ENCODE measurements at regions of chr6 and their contacts with region 1.

Region 1: DNA sequence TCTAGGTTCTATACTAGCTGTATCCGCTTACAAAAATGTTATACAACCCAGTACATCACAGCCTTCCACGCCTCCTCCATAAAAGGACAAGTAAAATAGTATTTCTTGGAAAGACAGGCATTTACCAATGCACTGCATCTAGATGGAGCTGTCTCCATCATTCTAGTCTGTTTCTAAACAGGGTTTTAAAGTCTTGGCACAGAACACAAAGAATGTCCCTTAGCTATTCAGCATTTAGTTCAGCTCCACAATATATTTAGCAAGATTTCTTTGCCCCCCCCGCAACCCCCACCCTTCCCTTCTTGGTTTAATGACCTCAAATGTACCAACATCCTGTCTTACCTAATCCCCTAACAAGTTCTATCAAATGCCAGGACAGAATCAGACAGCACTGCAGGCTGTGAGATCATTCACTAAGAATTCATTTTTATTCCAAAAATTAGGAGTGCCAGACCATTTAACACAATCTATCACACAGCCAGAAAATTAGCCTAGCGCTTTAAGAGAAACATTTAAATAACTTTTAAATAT is 198.6 kb downstream of the BACH2 start:
- DNase-seq: peak; percentile 17 to 39
- ATAC-seq: peak; percentile 86 to 93 (median 89)
- H3K4me3 ChIP-seq: no peak overlapping the region
- H3K27ac ChIP-seq: peak overlapping the region in 9 of 10 donors; percentile 37 to 85 (median 72)
- H3K4me1 ChIP-seq: peaks cover 2 to 45% (median 27%) of the 10 kb centered on the region in 9 donors
- H3K27me3 ChIP-seq: no peaks in the 10 kb centered on the region
- CTCF ChIP-seq: peak in 7 of 9 donors; percentile 25 to 63 (median 51)

Region 2: DNA sequence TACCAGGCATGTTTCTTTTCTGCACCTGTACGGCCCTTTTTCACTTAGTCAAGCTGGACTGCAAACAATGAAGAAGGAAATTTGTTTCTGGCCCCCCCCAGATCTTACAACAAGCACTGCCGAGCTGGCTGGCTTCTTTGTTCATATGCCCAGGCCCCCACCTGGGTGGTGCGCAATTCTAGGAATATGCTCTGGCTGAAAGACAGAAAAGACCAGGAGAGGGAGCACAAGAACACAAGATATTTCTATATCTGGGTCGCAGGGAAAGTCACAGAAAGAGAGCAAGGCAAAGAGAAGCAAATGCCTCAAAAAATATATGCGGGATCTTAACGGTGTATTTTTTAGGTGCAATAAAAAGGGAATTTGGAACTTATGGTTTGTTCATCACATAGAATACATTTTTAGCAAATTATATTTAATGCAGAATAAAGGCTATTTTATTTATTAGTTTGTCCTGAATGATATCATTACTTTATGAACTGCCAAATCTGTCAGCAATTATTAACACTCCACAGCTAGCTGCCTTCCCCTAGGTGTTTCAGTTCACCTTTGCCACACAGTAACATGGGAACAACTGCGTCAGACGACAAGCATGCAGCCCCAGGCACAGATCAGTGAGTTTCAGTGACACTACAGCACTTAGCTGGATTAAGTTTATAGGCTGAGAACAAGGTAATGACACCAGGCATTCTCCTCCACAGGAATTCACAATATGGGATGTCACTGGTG is 127.3 kb before region 1 on chr6:
- intact Hi-C with region 1: loop called in 3 of 10 experiments (anchors 10 kb)
- DNase-seq: peak; percentile 18 to 48
- ATAC-seq: peak; percentile 24 to 90 (median 79)
- H3K4me3 ChIP-seq: no peak overlapping the region
- H3K27ac ChIP-seq: no peak overlapping the region
- H3K4me1 ChIP-seq: peaks cover 7 to 31% (median 21%) of the 10 kb centered on the region in 9 donors
- H3K27me3 ChIP-seq: no peaks in the 10 kb centered on the region
- CTCF ChIP-seq: peak in 8 of 9 donors; percentile 20 to 80 (median 68)

Region 3: GRCh38 chr6:89984926-89985750 is 112.9 kb before region 1 on chr6:
- intact Hi-C with region 1: no loop called
- DNase-seq: peak; percentile 77 to 93
- ATAC-seq: peak; percentile 90 to 96 (median 95)
- H3K4me3 ChIP-seq: peak overlapping the region in 1 of 10 donors; percentile 3
- H3K27ac ChIP-seq: peak overlapping the region in 9 of 10 donors; percentile 41 to 84 (median 66)
- H3K4me1 ChIP-seq: peaks cover 9 to 38% (median 24%) of the 10 kb centered on the region in 9 donors
- H3K27me3 ChIP-seq: no peaks in the 10 kb centered on the region
- CTCF ChIP-seq: no peak

Region 4: DNA sequence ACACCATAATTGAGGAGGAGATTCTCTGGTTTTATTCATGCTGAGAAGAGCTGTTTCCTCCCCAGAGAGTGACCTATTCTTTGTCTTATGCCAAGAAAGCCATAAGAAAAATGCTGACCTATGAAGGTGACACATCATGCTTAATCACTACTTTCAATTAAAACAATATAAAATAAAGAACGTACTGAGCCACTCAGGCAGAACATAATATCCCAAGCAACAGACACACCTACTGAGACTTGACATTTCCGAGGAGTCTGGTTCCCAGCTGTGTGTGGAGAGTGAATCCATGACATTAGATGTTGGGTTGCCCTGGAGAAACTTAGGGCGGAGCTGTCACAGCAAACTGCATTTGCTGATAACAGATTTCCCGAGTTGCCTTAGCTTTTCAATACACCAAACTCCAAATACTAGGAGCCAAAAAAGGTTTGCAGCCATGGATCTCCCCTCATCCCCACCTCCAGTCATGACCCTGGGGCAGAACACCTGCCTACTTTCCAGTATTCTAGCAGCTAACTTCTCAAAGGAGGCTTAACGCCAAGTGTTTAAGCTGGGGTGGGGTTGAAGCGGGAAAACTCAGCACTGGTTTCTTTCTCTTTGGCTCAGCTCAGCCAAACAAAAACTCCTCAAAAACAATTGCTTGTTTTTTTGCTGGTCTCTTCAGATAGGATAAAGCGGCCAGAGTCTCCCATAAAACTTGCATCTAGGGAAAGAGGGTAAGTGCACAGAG is 106.4 kb after region 1 on chr6:
- intact Hi-C with region 1: no loop called
- DNase-seq: no peak
- ATAC-seq: peak in 5 of 8 donors; percentile 26 to 79 (median 53)
- H3K4me3 ChIP-seq: no peak overlapping the region
- H3K27ac ChIP-seq: no peak overlapping the region
- H3K4me1 ChIP-seq: peaks cover 0 to 15% (median 0%) of the 10 kb centered on the region in 9 donors
- H3K27me3 ChIP-seq: no peaks in the 10 kb centered on the region
- CTCF ChIP-seq: no peak

Region 5: GRCh38 chr6:90383196-90383822 is 285.2 kb after region 1 on chr6:
- intact Hi-C with region 1: loop called in 1 of 10 experiments (anchors 10 kb)
- DNase-seq: no peak
- ATAC-seq: no peak
- H3K4me3 ChIP-seq: no peak overlapping the region
- H3K27ac ChIP-seq: no peak overlapping the region
- H3K4me1 ChIP-seq: peaks cover 0 to 7% (median 0%) of the 10 kb centered on the region in 9 donors
- H3K27me3 ChIP-seq: peaks cover 0 to 5% (median 0%) of the 10 kb centered on the region in 7 donors
- CTCF ChIP-seq: no peak

Measured in heart right ventricle (tissue), 16 donors.